B cell (primary cell): ENCODE measurements at regions of chr15 and their contacts with region 1.

Region 1: GRCh38 chr15:70308011-70308734 is 210.5 kb upstream of the TLE3 start:
- DNase-seq: peak; percentile 73
- ATAC-seq: peak; percentile 92
- H3K4me3 ChIP-seq: no peak overlapping the region
- H3K4me3 Mint-ChIP-seq: peak overlapping the region; percentile 53
- H3K27ac ChIP-seq: no peak overlapping the region
- H3K27ac Mint-ChIP-seq: peak overlapping the region; percentile 62
- H3K4me1 ChIP-seq: peaks cover 18 to 20% of the 10 kb centered on the region in 2 donors
- H3K4me1 Mint-ChIP-seq: peaks cover 28% of the 10 kb centered on the region
- H3K27me3 ChIP-seq: no peaks in the 10 kb centered on the region
- H3K27me3 Mint-ChIP-seq: no peaks in the 10 kb centered on the region
- CTCF ChIP-seq: no peak

Region 2: GRCh38 chr15:70293591-70294470 is 14.3 kb before region 1 on chr15:
- CTCF ChIA-PET with region 1: no interaction called
- POLR2A ChIA-PET with region 1: interaction called, 15 read pairs
- intact Hi-C with region 1: no loop called
- DNase-seq: no peak
- ATAC-seq: no peak
- H3K4me3 ChIP-seq: no peak overlapping the region
- H3K4me3 Mint-ChIP-seq: no peak overlapping the region
- H3K27ac ChIP-seq: no peak overlapping the region
- H3K27ac Mint-ChIP-seq: no peak overlapping the region
- H3K4me1 ChIP-seq: no peaks in the 10 kb centered on the region
- H3K4me1 Mint-ChIP-seq: peaks cover 3% of the 10 kb centered on the region
- H3K27me3 ChIP-seq: no peaks in the 10 kb centered on the region
- H3K27me3 Mint-ChIP-seq: no peaks in the 10 kb centered on the region
- CTCF ChIP-seq: no peak